ENCODE measurements at regions of chr6 and their contacts with region 1.

Region 1: DNA sequence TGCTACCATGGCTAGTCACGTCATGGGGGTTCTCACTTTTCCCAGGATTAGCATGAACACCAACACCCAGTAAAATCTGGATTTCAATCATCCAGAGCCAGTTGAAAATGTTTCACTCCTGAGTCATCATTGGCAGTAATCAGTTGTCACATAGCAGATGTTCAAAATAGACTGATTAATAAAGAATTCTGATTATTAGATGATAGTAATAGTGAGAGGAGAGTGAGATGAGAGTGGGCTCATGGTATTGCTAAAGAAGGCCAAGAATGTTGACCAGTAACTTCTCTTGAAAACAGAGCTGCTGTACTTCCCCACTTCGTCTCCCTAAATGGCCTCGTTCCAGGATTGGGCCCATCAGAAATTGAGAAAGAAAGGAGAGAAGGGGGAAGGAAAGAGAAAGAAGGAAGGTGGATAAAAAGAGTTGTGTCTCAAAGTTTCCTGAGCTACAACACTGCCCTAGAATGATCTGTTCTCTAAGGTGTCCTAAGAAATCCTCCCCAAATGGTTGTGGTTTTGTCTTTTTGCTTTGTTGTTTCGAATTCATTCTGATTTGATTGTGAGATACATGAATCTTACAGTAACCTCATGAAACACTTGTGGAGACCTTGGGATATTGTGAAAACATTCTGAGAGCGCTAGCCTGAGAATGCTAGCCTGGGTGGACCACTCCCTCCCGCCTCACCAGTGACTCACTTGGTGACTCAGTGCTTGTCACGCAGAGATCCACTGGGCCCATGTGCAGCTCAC is 502.2 kb upstream of the JARID2 start:
- DNase-seq: peak; percentile 99
- H3K4me3 Mint-ChIP-seq: peak overlapping the region; percentile 73
- H3K27ac Mint-ChIP-seq: peak overlapping the region; percentile 100
- H3K4me1 Mint-ChIP-seq: peaks cover 41% of the 10 kb centered on the region
- H3K27me3 Mint-ChIP-seq: no peaks in the 10 kb centered on the region
- CTCF ChIP-seq: no peak

Region 2: DNA sequence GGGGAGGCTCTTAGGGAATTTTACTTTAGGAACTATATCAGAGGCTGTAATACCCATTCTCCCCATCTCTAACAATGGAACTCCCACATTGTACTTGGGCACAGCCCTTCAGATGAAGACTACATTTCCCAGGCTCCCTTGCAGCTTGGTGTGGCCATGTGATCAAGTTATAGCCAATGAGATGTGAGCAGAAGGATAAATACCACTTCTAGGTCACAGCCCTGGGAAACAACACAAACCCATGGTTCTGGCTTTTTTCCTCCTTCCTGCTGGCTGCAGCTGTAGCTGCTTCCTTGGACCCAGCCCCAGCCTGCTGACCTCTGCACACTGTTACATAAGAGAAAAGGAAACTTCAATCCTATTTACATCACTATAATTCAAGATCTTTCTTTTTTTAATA is 56.3 kb after region 1 on chr6:
- CTCF ChIA-PET with region 1: no interaction called
- POLR2A ChIA-PET with region 1: interaction called, 6 read pairs
- intact Hi-C with region 1: loop called (anchors 1 kb)
- DNase-seq: peak; percentile 83
- H3K4me3 Mint-ChIP-seq: no peak overlapping the region
- H3K27ac Mint-ChIP-seq: no peak overlapping the region
- H3K4me1 Mint-ChIP-seq: peaks cover 33% of the 10 kb centered on the region
- H3K27me3 Mint-ChIP-seq: no peaks in the 10 kb centered on the region
- CTCF ChIP-seq: no peak

Region 3: GRCh38 chr6:14841901-14842421 is 98.3 kb after region 1 on chr6:
- CTCF ChIA-PET with region 1: no interaction called
- POLR2A ChIA-PET with region 1: no interaction called
- intact Hi-C with region 1: loop called (anchors 1 kb)
- DNase-seq: peak; percentile 88
- H3K4me3 Mint-ChIP-seq: peak overlapping the region; percentile 42
- H3K27ac Mint-ChIP-seq: peak overlapping the region; percentile 83
- H3K4me1 Mint-ChIP-seq: peaks cover 15% of the 10 kb centered on the region
- H3K27me3 Mint-ChIP-seq: no peaks in the 10 kb centered on the region
- CTCF ChIP-seq: no peak

Region 4: GRCh38 chr6:14932485-14933155 is 189.0 kb after region 1 on chr6:
- CTCF ChIA-PET with region 1: no interaction called
- POLR2A ChIA-PET with region 1: no interaction called
- intact Hi-C with region 1: no loop called
- DNase-seq: no peak
- H3K4me3 Mint-ChIP-seq: no peak overlapping the region
- H3K27ac Mint-ChIP-seq: no peak overlapping the region
- H3K4me1 Mint-ChIP-seq: peaks cover 10% of the 10 kb centered on the region
- H3K27me3 Mint-ChIP-seq: no peaks in the 10 kb centered on the region
- CTCF ChIP-seq: no peak

Region 5: GRCh38 chr6:15441215-15441868 is 697.7 kb after region 1 on chr6:
- CTCF ChIA-PET with region 1: no interaction called
- POLR2A ChIA-PET with region 1: no interaction called
- intact Hi-C with region 1: loop called (anchors 5 kb)
- DNase-seq: peak; percentile 82
- H3K4me3 Mint-ChIP-seq: no peak overlapping the region
- H3K27ac Mint-ChIP-seq: no peak overlapping the region
- H3K4me1 Mint-ChIP-seq: peaks cover 31% of the 10 kb centered on the region
- H3K27me3 Mint-ChIP-seq: no peaks in the 10 kb centered on the region
- CTCF ChIP-seq: peak; percentile 75

Region 6: DNA sequence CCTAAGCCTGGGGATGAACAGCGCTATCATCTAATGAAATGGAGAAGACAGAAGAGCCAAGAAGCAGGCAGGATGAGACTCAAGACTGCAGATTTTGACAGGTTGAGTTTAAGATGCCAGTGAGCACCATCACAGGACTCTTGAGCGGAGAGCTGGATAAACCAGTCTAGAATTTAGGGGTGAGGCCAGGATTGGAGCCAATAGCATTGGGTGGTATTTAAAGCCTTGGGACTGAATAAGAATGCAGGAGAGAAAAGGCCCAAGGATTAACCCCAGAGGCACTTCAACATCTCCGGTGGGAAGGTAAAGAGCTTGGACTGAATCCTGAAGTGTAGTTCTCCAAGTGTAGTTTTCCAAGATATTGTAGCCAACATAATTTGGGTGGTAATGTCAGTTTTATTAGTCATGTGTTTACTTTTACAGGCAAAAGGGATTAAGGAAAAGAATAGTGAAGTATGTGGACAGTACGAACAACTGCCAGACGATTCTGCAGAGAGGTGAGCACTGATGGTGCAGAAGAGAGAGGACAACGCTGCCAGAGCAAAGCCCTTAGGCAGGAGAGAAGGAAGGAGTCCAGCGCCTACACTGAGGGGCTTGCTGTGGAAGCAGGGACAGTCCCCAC is 834.0 kb after region 1 on chr6:
- CTCF ChIA-PET with region 1: no interaction called
- POLR2A ChIA-PET with region 1: no interaction called
- intact Hi-C with region 1: no loop called
- DNase-seq: no peak
- H3K4me3 Mint-ChIP-seq: no peak overlapping the region
- H3K27ac Mint-ChIP-seq: no peak overlapping the region
- H3K4me1 Mint-ChIP-seq: no peaks in the 10 kb centered on the region
- H3K27me3 Mint-ChIP-seq: no peaks in the 10 kb centered on the region
- CTCF ChIP-seq: no peak